Aorta (tissue), 5 donors: ENCODE measurements at regions of chr2 and their contacts with region 1.

Region 1: DNA sequence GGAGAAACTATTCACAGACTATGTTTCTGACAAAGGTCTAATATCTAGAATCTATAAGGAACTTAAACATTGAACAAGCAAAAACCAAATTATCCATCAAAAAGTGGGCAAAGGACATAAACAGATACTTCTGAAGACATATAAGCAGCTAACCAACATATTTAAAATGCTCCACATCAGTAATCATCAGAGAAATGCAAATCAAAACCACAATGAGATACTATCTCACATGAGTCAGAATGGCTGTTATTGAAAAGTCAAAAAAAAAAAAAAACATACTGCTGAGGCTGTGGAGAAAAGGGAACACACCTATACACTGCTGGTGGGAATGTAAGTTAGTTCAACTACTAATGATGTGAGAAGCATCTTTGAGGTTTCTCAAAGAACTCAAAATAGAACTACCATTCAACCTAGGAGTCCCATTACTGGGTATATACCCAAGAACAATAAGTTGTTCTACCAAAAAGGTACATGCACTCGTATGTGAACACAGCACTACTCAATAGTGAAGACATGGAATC is 220.4 kb upstream of the TFPI start:
- DNase-seq: no peak
- ATAC-seq: no peak
- H3K4me3 ChIP-seq: no peak overlapping the region
- H3K27ac ChIP-seq: no peak overlapping the region
- H3K4me1 ChIP-seq: no peaks in the 10 kb centered on the region
- H3K27me3 ChIP-seq: no peaks in the 10 kb centered on the region

Region 2: DNA sequence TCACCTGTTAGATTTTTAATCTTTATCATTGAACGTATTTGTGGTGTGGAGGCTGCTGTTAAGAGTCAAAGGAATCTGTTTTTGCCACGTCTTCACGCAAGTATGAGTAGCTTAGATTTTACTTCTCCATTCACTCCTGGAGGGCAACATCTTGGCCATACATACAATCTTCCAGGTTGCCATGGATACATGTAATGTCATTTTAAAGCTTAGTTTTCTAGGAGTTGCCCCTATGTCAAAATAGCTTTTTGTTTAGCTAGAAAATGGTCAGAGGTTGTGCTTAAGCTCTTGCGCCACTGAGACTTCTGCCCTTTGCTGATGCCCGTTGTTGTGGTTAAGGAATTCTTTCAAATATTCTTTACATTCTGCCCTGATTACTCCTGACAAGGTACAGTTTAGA is 25.0 kb after region 1 on chr2:
- intact Hi-C with region 1: loop called in 1 of 2 experiments (anchors 1 kb)
- DNase-seq: no peak
- ATAC-seq: no peak
- H3K4me3 ChIP-seq: no peak overlapping the region
- H3K27ac ChIP-seq: no peak overlapping the region
- H3K4me1 ChIP-seq: no peaks in the 10 kb centered on the region
- H3K27me3 ChIP-seq: no peaks in the 10 kb centered on the region